ENCODE measurements at regions of chr9 and their contacts with region 1.

Region 1: DNA sequence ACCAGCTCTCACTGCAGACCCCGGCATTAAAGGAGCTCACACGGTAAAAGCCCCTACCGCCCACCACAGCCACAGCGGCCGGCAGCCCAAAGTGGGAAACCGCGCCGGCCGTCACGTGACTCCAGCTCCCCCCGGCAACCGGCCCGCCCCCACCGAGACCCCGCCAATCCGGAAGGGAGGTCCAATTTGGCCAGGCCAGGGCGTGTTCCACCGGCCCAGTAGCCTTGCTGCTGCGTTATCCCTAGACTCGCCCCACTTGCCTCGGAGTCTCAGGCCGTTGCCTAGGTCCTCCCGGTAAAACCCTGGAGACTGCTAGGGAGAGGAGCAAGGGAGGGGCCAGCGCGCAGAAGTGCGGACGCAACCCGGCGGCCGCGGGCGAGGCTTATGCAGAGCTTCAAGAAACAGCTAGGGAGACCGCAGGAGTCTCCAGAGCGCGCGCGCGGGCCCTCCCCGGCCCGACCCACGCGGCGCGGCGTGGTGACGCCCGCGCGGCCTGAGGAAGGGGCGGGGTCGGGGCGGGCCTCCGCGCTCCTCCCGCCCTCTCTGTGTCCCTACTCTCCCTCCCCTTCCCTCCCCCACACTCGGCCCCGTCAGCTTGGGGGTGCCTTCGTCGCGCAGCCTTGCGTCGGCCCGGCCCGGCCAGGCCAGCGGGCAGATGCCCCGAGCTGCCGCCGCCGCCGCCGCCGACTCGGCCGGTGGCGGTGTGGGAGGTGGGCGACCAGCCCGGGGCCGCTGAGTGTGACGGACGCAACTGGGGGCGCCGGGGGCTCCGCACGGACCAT is at the start of gene RIC1:
- DNase-seq: peak; percentile 91
- H3K4me3 ChIP-seq: peak within 1 kb of the TSS; percentile 81
- H3K27ac ChIP-seq: peak within 1 kb of the TSS; percentile 100
- H3K4me1 ChIP-seq: peaks cover 58% of the 10 kb centered on the region
- CTCF ChIP-seq: no peak
- total RNA-seq, gene RIC1: 72.9 and 77.0 TPM in 2 replicates

Region 2: GRCh38 chr9:4984621-4985385 is 643.9 kb before region 1 on chr9 and contains the start of gene JAK2:
- CTCF ChIA-PET with region 1: no interaction called
- POLR2A ChIA-PET with region 1: no interaction called
- intact Hi-C with region 1: loop called (anchors 10 kb)
- DNase-seq: peak; percentile 87
- H3K4me3 ChIP-seq: peak within 1 kb of the TSS; percentile 72
- H3K27ac ChIP-seq: peak within 1 kb of the TSS; percentile 72
- H3K4me1 ChIP-seq: peaks cover 31% of the 10 kb centered on the region
- CTCF ChIP-seq: peak; percentile 49
- total RNA-seq, gene JAK2: 3.7 and 4.4 TPM in 2 replicates

Region 3: GRCh38 chr9:5608298-5609225 is 20.2 kb before region 1 on chr9:
- CTCF ChIA-PET with region 1: no interaction called
- POLR2A ChIA-PET with region 1: interaction called, 25 read pairs
- intact Hi-C with region 1: no loop called
- DNase-seq: peak; percentile 41
- H3K4me3 ChIP-seq: peak overlapping the region; percentile 60
- H3K27ac ChIP-seq: peak overlapping the region; percentile 34
- H3K4me1 ChIP-seq: peaks cover 21% of the 10 kb centered on the region
- CTCF ChIP-seq: peak; percentile 32; the same call in 1 of the 2 replicates

Region 4: DNA sequence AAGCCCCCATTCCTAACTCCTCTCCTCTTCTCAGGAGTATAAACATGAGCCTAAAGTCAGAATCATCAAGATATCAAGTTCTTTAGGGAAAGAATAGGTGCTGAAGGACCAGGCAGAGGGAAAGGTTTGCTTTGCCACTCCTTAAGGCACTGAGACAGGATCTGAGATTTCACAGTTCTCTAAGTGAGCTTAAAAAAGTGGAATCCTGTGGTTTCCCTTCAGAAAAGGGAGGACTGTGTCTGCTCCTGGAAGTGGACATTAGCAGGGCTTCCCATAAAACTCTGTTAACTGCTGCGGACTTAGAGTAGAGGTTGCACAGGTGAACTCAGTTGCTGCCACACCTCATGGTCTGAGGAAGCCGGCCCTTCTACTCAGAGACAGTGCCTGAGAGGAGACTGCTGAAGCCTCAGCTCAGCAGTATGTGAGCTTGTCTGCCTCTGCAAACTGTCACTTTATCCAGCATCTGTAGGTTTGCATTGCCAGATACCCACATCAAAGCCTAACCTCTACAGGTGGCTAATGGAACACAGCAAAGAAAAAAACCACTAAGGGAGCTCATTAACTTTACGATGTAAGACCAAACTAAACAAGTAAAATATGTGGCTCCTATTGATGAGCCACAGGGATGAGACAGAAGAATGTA is 43.1 kb after region 1 on chr9:
- CTCF ChIA-PET with region 1: no interaction called
- POLR2A ChIA-PET with region 1: interaction called, 12 read pairs
- intact Hi-C with region 1: loop called (anchors 2 kb)
- DNase-seq: peak; percentile 87
- H3K4me3 ChIP-seq: no peak overlapping the region
- H3K27ac ChIP-seq: peak overlapping the region; percentile 77
- H3K4me1 ChIP-seq: peaks cover 17% of the 10 kb centered on the region
- CTCF ChIP-seq: no peak

Region 5: GRCh38 chr9:5764130-5764868 is 135.6 kb after region 1 on chr9:
- CTCF ChIA-PET with region 1: interaction called, 3 read pairs
- POLR2A ChIA-PET with region 1: interaction called, 4 read pairs
- intact Hi-C with region 1: loop called (anchors 5 kb)
- DNase-seq: peak; percentile 83
- H3K4me3 ChIP-seq: peak overlapping the region; percentile 5
- H3K27ac ChIP-seq: peak overlapping the region; percentile 86
- H3K4me1 ChIP-seq: peaks cover 24% of the 10 kb centered on the region
- CTCF ChIP-seq: no peak

Region 6: DNA sequence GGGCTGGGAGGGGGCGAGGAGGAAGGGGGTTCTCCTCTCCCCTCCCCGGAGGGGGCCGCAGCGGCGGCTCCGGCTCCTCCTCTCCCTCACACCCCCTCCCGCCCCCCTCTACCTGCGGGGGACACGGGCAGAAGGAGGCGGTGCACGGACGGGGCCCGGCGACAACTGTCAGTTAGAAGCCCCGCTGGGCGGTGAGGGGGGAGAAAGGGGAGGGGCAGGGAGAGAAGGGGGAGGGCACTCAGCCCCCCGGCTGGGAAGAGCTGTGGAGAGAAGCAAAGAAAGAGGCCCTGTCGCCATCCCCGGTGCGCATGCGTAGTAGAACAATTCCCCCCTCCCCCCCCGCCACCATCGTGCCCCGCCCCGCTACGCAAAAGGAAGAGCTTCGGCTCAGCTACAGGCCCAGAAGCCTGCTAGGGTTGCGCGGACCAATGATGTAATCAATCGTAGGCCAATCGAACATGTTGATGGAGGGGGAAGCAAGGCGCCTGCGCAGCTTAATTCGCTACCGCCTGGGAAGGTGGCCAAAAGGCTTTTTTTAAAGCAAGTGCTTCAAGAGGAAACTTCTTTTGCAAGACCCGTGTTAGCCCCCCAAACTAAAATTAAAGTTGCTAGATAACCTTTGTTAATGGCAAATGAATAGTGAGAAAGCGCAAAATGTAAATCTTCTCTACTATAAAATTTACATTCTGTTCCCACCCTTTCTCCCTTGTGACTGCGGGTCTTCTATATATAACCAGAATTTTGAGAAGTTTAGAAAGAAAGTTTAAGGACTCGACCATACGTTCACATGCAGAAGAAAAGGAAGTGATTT is 379.7 kb after region 1 on chr9:
- CTCF ChIA-PET with region 1: no interaction called
- POLR2A ChIA-PET with region 1: no interaction called
- intact Hi-C with region 1: loop called (anchors 5 kb)
- DNase-seq: peak; percentile 98
- H3K4me3 ChIP-seq: peak overlapping the region; percentile 94
- H3K27ac ChIP-seq: peak overlapping the region; percentile 70
- H3K4me1 ChIP-seq: peaks cover 56% of the 10 kb centered on the region
- CTCF ChIP-seq: no peak

Measured in OCI-LY7 (cell line).